Activated T-helper 2 cell treated with anti-CD3 and anti-CD28 coated beads, Interferon-gamma antibody, Interleukin-2, Interleukin-4, amounts not matched to agents 10 μg/mL and 5 μg/mL and 100 μg/mL, durations not matched to agents 14 hours and 24 hours and 36 hours (primary cell): ENCODE measurements at regions of chr7 and their contacts with region 1.

Region 1: DNA sequence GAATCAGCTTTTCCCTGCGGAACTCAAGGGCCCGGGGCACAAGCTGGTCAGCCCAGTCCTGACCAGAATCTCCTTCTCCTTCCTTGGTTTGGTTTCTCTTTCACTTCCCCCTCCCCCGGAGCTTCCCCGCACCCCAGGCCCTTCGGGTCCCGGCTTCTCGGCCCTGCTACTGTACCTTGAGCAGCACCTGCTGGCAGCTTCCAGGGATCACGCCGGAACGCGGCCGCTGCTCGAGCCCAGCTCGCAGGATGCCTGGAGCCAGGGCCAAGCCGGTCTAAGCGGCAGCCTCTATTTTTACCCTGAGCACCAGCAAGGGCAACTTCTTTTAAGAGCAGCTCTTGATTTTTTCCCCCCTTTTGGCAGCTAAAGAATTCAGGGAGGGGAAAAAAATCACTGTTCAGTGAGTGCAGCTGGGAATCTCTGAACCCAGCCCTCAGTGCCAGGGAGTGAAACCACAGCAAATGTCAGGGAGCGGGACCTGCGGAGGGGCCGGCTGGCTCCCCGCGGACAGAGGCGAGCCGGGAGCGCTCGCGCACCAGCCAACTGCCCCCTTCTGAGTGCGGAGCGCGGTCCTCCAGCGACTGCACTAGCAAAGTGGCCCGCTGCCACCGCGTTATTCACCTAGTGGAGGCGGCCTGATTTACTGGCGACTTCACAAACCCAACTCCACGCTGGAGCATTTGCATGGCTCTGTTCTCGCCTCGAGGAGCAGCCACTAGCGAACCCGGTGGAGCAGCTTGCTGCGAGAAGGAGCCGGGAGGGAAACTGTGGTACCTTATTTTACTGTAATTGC is 2.4 kb upstream of the INHBA start:
- DNase-seq: peak; percentile 46
- H3K4me3 Mint-ChIP-seq: peak overlapping the region; percentile 74
- H3K27ac Mint-ChIP-seq: no peak overlapping the region
- H3K4me1 Mint-ChIP-seq: peaks cover 17% of the 10 kb centered on the region
- H3K27me3 Mint-ChIP-seq: peaks cover 45% of the 10 kb centered on the region

Region 2: DNA sequence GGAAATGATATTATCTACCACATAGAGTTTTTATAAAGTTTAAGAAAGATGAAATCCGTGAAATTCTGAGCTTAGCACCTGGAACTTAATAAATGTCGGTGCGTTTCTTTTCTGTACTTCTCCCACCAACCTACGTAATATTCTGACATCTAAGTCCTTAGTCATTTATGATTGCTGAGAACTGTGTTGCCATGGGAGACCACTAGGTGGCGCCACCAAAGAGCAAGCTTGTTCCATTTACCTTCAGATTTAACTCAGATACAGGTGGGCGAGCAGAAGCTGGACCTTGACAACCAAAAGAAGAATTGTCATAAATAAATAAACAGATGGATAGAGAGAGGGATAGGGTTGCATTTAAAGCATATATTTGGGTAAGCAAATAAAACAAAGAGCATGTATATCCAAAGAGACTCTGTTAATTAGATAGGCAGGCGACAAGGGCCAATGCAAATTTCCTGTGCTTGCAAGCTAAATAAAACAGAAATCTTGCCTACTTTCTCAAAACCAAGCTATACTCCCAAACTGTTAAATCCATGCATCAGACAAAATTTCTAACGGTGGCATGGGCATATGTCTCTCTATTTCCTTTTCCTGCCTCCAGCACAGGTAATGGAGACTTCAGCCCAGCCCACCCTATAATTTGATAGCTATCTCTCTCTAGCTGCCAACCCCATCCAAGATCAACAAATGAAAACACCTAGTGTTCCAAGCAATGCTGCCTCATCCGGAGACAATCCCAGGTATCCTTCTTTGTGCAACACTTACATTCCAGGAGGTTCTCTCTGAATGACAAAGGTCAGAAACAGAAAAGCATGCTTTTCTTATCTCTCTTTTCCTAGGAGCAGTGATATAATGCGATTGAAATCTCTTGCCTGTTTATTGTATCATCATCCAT is 702.0 kb before region 1 on chr7:
- intact Hi-C with region 1: loop called (anchors 10 kb)
- DNase-seq: peak; percentile 13
- H3K4me3 Mint-ChIP-seq: no peak overlapping the region
- H3K27ac Mint-ChIP-seq: no peak overlapping the region
- H3K4me1 Mint-ChIP-seq: no peaks in the 10 kb centered on the region
- H3K27me3 Mint-ChIP-seq: no peaks in the 10 kb centered on the region

Region 3: GRCh38 chr7:41554481-41554880 is 150.8 kb before region 1 on chr7:
- intact Hi-C with region 1: no loop called
- DNase-seq: no peak
- H3K4me3 Mint-ChIP-seq: no peak overlapping the region
- H3K27ac Mint-ChIP-seq: no peak overlapping the region
- H3K4me1 Mint-ChIP-seq: no peaks in the 10 kb centered on the region
- H3K27me3 Mint-ChIP-seq: no peaks in the 10 kb centered on the region